CD4-positive, alpha-beta memory T cell (primary cell): ENCODE measurements at regions of chr11 and their contacts with region 1.

Region 1: GRCh38 chr11:7665473-7666291 is 7.6 kb downstream of the CYB5R2 start:
- DNase-seq: peak; percentile 58 to 70 (median 68)
- H3K4me3 ChIP-seq: no peak overlapping the region
- H3K4me3 Mint-ChIP-seq: no peak overlapping the region
- H3K27ac ChIP-seq: no peak overlapping the region
- H3K27ac Mint-ChIP-seq: no peak overlapping the region
- H3K4me1 ChIP-seq: no peaks in the 10 kb centered on the region
- H3K4me1 Mint-ChIP-seq: peaks cover 0 to 3% (median under 1%) of the 10 kb centered on the region in 4 donors
- H3K27me3 ChIP-seq: no peaks in the 10 kb centered on the region
- H3K27me3 Mint-ChIP-seq: peaks cover 3 to 5% of the 10 kb centered on the region in 2 donors

Region 2: GRCh38 chr11:7467652-7468051 is 198.0 kb before region 1 on chr11:
- CTCF ChIA-PET with region 1: no interaction called
- POLR2A ChIA-PET with region 1: no interaction called
- intact Hi-C with region 1: no loop called
- DNase-seq: no peak
- H3K4me3 ChIP-seq: no peak overlapping the region
- H3K4me3 Mint-ChIP-seq: no peak overlapping the region
- H3K27ac ChIP-seq: no peak overlapping the region
- H3K27ac Mint-ChIP-seq: no peak overlapping the region
- H3K4me1 ChIP-seq: peaks cover 4% of the 10 kb centered on the region
- H3K4me1 Mint-ChIP-seq: peaks cover 4 to 8% (median 5%) of the 10 kb centered on the region in 4 donors
- H3K27me3 ChIP-seq: no peaks in the 10 kb centered on the region
- H3K27me3 Mint-ChIP-seq: peaks cover 2% of the 10 kb centered on the region in 2 donors

Region 3: DNA sequence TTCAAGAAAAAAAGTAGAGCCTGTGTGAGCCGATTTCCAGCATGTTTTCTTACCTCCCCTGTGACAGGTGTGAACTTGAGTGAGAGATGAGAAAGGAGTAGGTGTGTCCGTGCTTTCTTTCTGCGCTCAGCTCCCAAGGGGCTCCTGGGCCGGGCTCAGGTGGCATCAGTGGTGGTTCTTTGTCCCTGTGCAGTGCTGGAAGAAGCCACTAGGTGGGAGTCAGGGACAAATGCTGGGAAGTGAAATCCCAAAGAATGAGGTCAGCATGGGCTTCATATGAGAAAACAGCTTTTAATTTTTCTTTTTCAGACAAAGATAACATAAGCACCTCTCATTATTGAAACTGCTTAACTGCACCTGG is 94.1 kb before region 1 on chr11:
- CTCF ChIA-PET with region 1: interaction called, 3 read pairs
- POLR2A ChIA-PET with region 1: no interaction called
- intact Hi-C with region 1: loop called (anchors 1 kb)
- DNase-seq: no peak
- H3K4me3 ChIP-seq: no peak overlapping the region
- H3K4me3 Mint-ChIP-seq: no peak overlapping the region
- H3K27ac ChIP-seq: no peak overlapping the region
- H3K27ac Mint-ChIP-seq: no peak overlapping the region
- H3K4me1 ChIP-seq: peaks cover 14% of the 10 kb centered on the region
- H3K4me1 Mint-ChIP-seq: peaks cover 5 to 25% (median 16%) of the 10 kb centered on the region in 4 donors
- H3K27me3 ChIP-seq: no peaks in the 10 kb centered on the region
- H3K27me3 Mint-ChIP-seq: peaks cover 0 to 4% of the 10 kb centered on the region in 2 donors

Region 4: GRCh38 chr11:7677071-7677470 is 11.4 kb after region 1 on chr11:
- CTCF ChIA-PET with region 1: interaction called, 14 read pairs
- POLR2A ChIA-PET with region 1: no interaction called
- intact Hi-C with region 1: no loop called
- DNase-seq: no peak
- H3K4me3 ChIP-seq: no peak overlapping the region
- H3K4me3 Mint-ChIP-seq: no peak overlapping the region
- H3K27ac ChIP-seq: no peak overlapping the region
- H3K27ac Mint-ChIP-seq: no peak overlapping the region
- H3K4me1 ChIP-seq: peaks cover 14% of the 10 kb centered on the region
- H3K4me1 Mint-ChIP-seq: peaks cover 5 to 18% (median 11%) of the 10 kb centered on the region in 4 donors
- H3K27me3 ChIP-seq: peaks cover 7% of the 10 kb centered on the region
- H3K27me3 Mint-ChIP-seq: peaks cover 41 to 59% of the 10 kb centered on the region in 2 donors